PC-9 (cell line): ENCODE measurements at regions of chr2 and their contacts with region 1.

Region 1: GRCh38 chr2:120566331-120567035 is 169.2 kb upstream of the GLI2 start:
- DNase-seq: no peak
- H3K4me3 ChIP-seq: no peak overlapping the region
- H3K27ac ChIP-seq: no peak overlapping the region
- H3K4me1 ChIP-seq: peaks cover 29% of the 10 kb centered on the region
- H3K27me3 ChIP-seq: no peaks in the 10 kb centered on the region
- CTCF ChIP-seq: no peak

Region 2: DNA sequence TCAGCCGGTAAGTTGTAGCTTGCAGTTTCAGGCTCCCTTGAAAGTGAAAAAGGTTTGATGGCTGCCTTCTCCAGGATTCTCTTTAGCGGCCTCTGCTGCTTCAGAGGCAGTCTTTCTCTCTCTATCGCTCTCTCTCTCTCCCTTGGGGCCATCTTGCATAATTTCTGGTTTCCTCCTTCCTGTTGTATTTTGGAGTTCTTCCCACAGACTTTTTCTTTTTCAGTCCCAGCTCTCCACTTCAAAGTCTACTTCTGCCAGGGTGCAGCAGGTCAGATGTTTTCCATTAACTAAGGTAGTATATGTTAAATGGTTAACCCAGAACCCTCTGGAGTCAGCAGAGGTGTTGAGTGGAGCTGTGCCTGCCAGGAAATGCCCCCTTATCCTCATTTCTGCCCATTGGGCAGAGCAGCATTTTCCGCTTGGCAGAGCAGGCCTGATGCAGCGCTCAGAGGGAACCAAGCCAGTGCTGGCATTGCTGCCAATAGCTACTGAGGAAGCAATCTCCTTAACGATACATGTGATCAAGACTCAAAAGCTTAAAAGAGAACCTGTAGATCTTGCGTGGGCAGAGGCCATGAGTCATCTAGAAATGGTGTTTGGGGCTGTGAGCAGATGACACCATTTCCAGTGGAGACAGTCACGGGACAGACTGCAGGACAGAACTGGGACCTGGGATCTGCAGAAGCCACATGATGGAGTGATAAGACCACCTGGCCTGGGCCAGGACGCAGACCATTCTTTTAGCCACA is 1178.9 kb before region 1 on chr2:
- CTCF ChIA-PET with region 1: no interaction called
- POLR2A ChIA-PET with region 1: no interaction called
- intact Hi-C with region 1: no loop called
- DNase-seq: peak; percentile 10 to 57
- H3K4me3 ChIP-seq: no peak overlapping the region
- H3K27ac ChIP-seq: no peak overlapping the region
- H3K4me1 ChIP-seq: peaks cover 37% of the 10 kb centered on the region
- H3K27me3 ChIP-seq: no peaks in the 10 kb centered on the region
- CTCF ChIP-seq: no peak

Region 3: GRCh38 chr2:120456867-120457266 is 109.6 kb before region 1 on chr2:
- CTCF ChIA-PET with region 1: no interaction called
- POLR2A ChIA-PET with region 1: no interaction called
- intact Hi-C with region 1: no loop called
- DNase-seq: peak in 1 of 2 experiments; percentile 52
- H3K4me3 ChIP-seq: no peak overlapping the region
- H3K27ac ChIP-seq: no peak overlapping the region
- H3K4me1 ChIP-seq: peaks cover 8% of the 10 kb centered on the region; the same call in 1 of the 2 replicates
- H3K27me3 ChIP-seq: no peaks in the 10 kb centered on the region
- CTCF ChIP-seq: peak; percentile 65

Region 4: GRCh38 chr2:120625865-120626560 is 59.5 kb after region 1 on chr2:
- CTCF ChIA-PET with region 1: no interaction called
- POLR2A ChIA-PET with region 1: no interaction called
- intact Hi-C with region 1: loop called (anchors 5 kb)
- DNase-seq: peak; percentile 86 to 87
- H3K4me3 ChIP-seq: no peak overlapping the region
- H3K27ac ChIP-seq: no peak overlapping the region
- H3K4me1 ChIP-seq: peaks cover 28% of the 10 kb centered on the region
- H3K27me3 ChIP-seq: no peaks in the 10 kb centered on the region
- CTCF ChIP-seq: no peak

Region 5: DNA sequence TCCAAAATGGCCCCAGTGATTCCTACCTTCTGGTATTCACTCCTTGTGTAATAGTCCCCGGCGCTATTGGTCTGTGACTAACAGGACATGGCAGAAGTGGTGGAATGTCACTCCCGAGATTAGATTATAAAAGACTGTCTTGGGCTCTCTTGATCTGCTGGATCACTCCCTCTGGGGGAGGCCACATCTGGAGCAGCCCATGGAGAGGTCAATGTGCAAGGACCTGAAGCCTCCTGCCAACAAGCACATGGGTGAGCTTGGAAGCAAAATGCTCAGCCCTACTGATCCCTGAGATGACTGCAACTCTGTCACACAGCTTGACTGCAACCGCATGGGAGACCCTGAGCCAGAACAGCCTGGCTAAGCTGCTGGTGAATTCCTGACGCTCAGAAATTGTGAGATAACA is 74.9 kb after region 1 on chr2:
- CTCF ChIA-PET with region 1: no interaction called
- POLR2A ChIA-PET with region 1: interaction called, 10 read pairs
- intact Hi-C with region 1: no loop called
- DNase-seq: peak in 1 of 2 experiments; percentile 13
- H3K4me3 ChIP-seq: no peak overlapping the region
- H3K27ac ChIP-seq: no peak overlapping the region
- H3K4me1 ChIP-seq: no peaks in the 10 kb centered on the region
- H3K27me3 ChIP-seq: no peaks in the 10 kb centered on the region
- CTCF ChIP-seq: no peak

Region 6: DNA sequence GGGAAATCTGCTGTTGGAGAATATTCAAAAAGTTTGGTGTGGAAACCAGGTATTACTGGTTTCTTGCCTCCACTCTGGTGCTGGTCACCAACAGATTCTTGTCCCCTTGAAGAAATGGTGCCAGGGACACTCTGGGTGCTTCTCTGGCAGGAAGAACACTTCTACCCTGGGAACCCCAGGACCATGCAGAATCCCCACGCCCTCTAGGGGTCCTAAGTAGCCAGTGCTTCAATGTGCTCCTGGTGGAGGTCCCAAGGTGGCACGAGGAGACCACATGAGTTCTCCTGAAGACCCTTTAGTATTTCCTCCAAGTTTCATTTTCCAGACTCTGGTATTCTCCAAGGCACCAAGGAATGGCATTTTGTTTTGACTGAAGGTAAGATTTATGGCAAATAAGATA is 1569.6 kb after region 1 on chr2:
- CTCF ChIA-PET with region 1: no interaction called
- POLR2A ChIA-PET with region 1: no interaction called
- intact Hi-C with region 1: no loop called
- DNase-seq: no peak
- H3K4me3 ChIP-seq: no peak overlapping the region
- H3K27ac ChIP-seq: no peak overlapping the region
- H3K4me1 ChIP-seq: no peaks in the 10 kb centered on the region
- H3K27me3 ChIP-seq: peaks cover 34% of the 10 kb centered on the region
- CTCF ChIP-seq: peak; percentile 47; the same call in 1 of the 2 replicates